ENCODE measurements at regions of chr7 and their contacts with region 1.

Region 1: DNA sequence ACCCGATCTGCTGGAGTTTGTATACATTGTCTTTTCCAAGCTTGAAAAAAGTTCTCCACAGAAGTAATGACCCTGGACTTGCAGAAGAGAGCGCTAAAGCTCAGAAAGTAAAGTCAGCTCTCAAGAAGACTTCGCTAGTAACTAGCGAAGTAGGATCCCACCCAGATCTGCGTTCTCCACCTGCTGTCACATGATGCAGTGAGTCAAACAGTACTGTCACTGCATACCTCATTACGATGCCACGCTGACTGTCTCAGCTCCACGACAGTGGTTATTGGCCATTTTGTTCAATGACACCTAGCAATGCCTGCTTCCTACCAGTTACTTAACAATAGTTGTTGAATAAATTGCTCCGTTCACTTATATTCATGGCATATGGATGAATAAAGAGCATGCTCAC is 29.7 kb upstream of the SEC61G start:
- DNase-seq: no peak
- ATAC-seq: peak; percentile 81 to 96

Region 2: DNA sequence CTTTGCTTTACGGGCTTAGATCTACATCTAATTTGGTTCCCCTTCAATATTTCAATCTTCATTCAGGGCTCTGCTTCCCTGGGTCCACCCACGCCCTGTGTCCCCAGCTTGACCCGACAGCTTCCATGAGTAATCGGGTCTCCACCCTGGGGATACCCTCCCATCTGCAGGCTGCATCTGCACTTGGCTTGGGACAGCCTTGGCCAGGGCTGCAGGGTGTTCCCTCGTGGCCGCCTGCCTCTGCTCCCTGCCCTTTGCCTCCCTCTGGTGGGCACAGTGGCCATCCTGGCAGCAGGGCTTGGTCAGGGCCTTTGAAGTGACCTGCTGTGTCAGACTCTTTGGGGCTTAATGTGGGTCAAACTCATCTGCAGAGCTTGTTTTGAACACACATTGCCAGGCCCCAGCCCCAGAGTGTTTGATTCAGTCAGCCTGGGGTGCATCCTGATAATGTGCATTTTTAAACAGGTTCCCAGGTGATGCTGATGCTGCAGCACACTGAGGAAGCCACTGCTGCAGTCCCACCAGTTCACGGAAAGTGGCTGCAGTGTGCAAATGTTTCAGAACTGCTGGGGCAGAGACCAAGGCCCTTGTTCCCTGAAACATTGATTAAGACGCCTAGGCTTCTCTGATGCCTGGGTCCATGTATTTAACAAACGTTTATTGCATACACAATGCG is 51.0 kb after region 1 on chr7:
- intact Hi-C with region 1: loop called in 1 of 2 experiments (anchors 5 kb)
- DNase-seq: peak; percentile 84
- ATAC-seq: peak; percentile 82 to 97

Region 3: DNA sequence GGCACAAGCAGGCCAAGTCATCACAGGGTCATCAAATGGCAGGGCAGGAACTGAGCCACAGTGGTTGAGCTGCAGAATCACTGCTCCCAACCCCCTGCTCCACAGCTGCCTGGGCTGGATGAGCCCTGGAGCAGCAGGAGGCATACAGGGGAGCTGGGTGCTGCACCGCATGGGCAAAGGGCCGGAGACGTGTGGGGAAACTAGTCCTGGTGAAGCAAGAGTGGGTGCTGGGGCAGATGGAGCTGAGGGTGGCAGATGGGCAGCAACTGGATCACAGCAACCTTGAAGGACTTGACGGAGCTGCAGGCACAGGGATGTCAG is 799.7 kb after region 1 on chr7:
- intact Hi-C with region 1: no loop called
- DNase-seq: no peak
- ATAC-seq: no peak